Dendritic cell treated with granulocyte-macrophage colony-stimulating factor and Interleukin-4, amounts not matched to agents 40 ng/mL and 50 ng/mL, for 4 days (primary cell): ENCODE measurements at regions of chr22 and their contacts with region 1.

Region 1: GRCh38 chr22:20825624-20826023 is 33.0 kb downstream of the PI4KA start:
- H3K4me3 Mint-ChIP-seq: no peak overlapping the region
- H3K27ac Mint-ChIP-seq: no peak overlapping the region
- H3K4me1 Mint-ChIP-seq: peaks cover 9% of the 10 kb centered on the region
- H3K27me3 Mint-ChIP-seq: no peaks in the 10 kb centered on the region

Region 2: DNA sequence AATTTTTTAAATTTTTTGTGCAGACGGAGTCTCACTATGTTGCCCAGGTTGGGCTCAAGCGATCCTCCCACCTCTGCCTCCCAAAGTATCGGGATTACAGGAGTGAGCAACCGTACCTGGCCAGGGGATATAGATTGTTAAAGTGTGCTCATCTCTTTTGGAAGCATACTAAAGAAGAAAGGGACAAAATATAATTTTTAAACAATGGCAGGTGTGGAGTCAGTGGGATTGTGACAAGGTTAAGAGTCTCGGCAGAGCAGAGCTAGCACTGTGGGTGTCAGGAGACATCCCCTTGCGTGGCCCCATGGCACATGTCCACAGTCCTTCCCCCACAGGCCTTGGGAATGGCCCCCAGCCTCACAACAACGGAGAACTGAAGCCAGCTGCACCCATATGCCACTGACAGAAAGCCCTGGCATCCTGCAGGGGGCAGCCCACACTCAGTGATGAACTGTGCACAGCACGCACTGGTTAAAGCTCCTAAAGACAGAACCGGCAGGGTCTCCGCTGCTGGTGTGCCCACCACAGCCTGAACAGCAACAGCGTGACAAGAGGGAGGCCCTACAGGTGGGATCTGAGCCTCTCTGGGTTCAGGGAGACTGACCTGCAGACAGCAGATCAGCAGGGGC is 21.8 kb before region 1 on chr22:
- intact Hi-C with region 1: no loop called
- H3K4me3 Mint-ChIP-seq: no peak overlapping the region
- H3K27ac Mint-ChIP-seq: no peak overlapping the region
- H3K4me1 Mint-ChIP-seq: no peaks in the 10 kb centered on the region
- H3K27me3 Mint-ChIP-seq: no peaks in the 10 kb centered on the region

Region 3: GRCh38 chr22:20844055-20845037 is 18.7 kb after region 1 on chr22:
- intact Hi-C with region 1: loop called (anchors 2 kb)
- H3K4me3 Mint-ChIP-seq: no peak overlapping the region
- H3K27ac Mint-ChIP-seq: no peak overlapping the region
- H3K4me1 Mint-ChIP-seq: peaks cover 30% of the 10 kb centered on the region
- H3K27me3 Mint-ChIP-seq: no peaks in the 10 kb centered on the region